Breast epithelium (tissue), 4 donors: ENCODE measurements at regions of chr3 and their contacts with region 1.

Region 1: GRCh38 chr3:139329345-139329850 is 14.4 kb upstream of the MRPS22 start:
- DNase-seq: peak; percentile 56 to 87
- H3K4me3 ChIP-seq: peak overlapping the region in 1 of 3 donors; percentile 52
- H3K27ac ChIP-seq: no peak overlapping the region
- H3K4me1 ChIP-seq: no peaks in the 10 kb centered on the region
- H3K27me3 ChIP-seq: peaks cover 0 to 15% of the 10 kb centered on the region in 2 donors
- CTCF ChIP-seq: peak; percentile 67 to 97 (median 92)
- POLR2A ChIP-seq: no peak

Region 2: DNA sequence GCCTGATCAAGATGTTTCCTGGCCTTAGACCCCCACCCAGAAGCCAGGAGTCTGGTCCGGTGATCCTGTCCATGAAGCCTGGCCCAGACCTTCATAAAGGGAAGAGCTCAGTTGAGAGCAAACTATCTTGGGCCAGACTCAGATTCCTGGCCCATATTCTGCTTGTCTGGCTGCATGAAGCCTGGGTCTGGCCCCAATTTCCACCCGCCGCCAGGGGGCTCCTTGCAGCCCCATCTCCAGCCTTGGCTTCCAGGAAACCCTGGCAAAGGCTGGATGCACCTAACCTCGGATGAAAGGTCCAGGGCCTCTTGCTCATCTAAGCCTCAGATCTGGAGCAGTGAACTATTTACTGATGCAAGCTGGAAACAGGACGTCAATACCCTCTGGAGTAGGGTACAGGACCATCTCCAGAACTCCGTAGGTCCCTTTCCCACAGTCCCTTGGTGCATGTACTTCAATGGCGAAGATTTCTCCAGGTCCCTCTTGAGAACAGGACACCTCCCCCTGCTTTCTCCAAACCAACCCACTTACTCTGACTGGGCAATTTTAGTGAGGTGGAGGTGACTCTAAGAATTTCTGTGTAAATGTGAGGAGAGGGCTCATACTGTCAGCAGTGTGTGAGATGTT is 388.0 kb before region 1 on chr3:
- intact Hi-C with region 1: loop called (anchors 10 kb)
- DNase-seq: no peak
- H3K4me3 ChIP-seq: no peak overlapping the region
- H3K27ac ChIP-seq: no peak overlapping the region
- H3K4me1 ChIP-seq: peaks cover 0 to 26% of the 10 kb centered on the region in 2 donors
- H3K27me3 ChIP-seq: peaks cover 13 to 99% of the 10 kb centered on the region in 2 donors
- CTCF ChIP-seq: no peak
- POLR2A ChIP-seq: no peak